ENCODE measurements at regions of chr2 and their contacts with region 1.

Region 1: DNA sequence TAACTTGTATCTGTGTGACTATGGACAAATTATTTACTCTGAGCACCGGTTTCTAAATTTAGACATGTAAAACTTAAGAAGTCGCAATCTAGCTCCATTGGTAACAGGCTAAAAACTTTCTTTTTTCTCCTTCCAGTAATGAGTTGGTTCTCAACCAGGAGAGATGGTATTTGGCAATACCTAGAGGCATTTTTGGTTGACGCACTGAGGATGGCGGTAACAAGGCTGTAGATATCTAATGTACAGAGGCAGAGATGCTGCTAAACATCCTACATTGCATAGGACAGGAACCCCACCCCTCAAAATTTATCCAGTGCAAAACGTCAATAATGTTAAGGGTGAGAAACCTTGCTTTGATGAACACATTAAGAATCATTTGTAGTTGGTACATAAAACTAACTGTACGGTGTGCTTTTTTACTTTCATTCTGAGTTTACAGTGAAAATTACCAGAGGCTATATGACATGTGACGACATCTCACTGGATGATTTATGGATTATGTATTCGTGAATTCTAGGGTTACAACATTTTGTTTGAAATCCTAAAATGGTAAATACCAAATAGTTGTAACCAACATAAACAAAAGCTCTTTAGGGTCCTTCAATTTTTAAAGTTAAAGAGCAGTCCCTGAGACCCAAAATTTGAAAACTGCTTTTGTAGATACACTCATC is 91.3 kb downstream of the TLK1 start:
- DNase-seq: peak; percentile 37
- H3K4me3 Mint-ChIP-seq: peak overlapping the region; percentile 36
- H3K27ac Mint-ChIP-seq: no peak overlapping the region
- H3K4me1 Mint-ChIP-seq: peaks cover 4% of the 10 kb centered on the region
- H3K27me3 Mint-ChIP-seq: no peaks in the 10 kb centered on the region
- CTCF ChIP-seq: no peak

Region 2: GRCh38 chr2:171086352-171087290 is 17.2 kb after region 1 on chr2:
- CTCF ChIA-PET with region 1: interaction called, 10 read pairs
- POLR2A ChIA-PET with region 1: interaction called, 3 read pairs
- intact Hi-C with region 1: no loop called
- DNase-seq: peak; percentile 58
- H3K4me3 Mint-ChIP-seq: no peak overlapping the region
- H3K27ac Mint-ChIP-seq: no peak overlapping the region
- H3K4me1 Mint-ChIP-seq: peaks cover 27% of the 10 kb centered on the region
- H3K27me3 Mint-ChIP-seq: no peaks in the 10 kb centered on the region
- CTCF ChIP-seq: peak; percentile 24

Measured in MCF 10A (cell line).